Activated CD4-positive, alpha-beta memory T cell treated with anti-CD3 and anti-CD28 coated beads, Interleukin-2, amount 10 ng/mL, durations not matched to agents 7 days and 5 days (primary cell): ENCODE measurements at regions of chr12 and their contacts with region 1.

Region 1: DNA sequence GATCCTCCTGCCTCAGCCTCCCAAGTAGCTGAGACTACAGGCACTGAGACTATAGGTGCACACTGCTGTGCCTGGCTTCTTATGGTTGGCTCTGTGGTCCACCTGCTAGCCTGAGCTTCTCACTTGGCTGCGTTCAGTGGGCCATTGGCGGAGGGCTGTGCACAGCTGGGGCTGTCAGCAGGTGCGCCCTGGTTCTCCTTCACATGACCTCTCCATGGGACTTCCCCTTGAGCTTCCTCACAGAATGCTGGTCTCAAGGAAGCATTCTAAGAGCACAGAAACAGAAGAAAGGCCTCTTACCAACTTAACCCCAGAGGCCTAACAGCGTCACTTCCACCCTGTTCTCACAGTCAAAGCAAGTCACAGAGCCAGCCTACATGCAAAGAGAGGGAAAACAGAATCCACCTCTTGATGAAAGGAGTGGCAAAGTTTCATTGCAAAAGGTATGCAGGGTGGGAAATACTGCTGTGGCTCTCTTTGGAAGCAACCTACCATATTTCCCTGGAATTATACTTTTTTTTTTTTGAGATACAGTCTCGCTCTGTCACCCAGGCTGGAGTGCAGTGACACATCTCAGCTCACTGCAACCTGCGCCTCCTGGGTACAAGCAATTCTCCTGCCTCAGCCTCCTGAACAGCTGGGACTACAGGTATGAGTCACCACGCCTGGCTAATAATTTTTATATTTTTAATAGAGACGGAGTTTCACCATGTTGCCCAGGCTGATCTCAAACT is 9.3 kb downstream of the RILPL2 start:
- DNase-seq: peak; percentile 53
- H3K4me3 Mint-ChIP-seq: peak overlapping the region; percentile 10
- H3K27ac Mint-ChIP-seq: peak overlapping the region; percentile 78
- H3K4me1 Mint-ChIP-seq: peaks cover 40% of the 10 kb centered on the region
- H3K27me3 Mint-ChIP-seq: no peaks in the 10 kb centered on the region

Region 2: GRCh38 chr12:123445388-123446351 is 18.5 kb after region 1 on chr12:
- CTCF ChIA-PET with region 1: interaction called, 6 read pairs
- POLR2A ChIA-PET with region 1: interaction called, 58 read pairs
- DNase-seq: no peak
- H3K4me3 Mint-ChIP-seq: no peak overlapping the region
- H3K27ac Mint-ChIP-seq: peak overlapping the region; percentile 65
- H3K4me1 Mint-ChIP-seq: peaks cover 41% of the 10 kb centered on the region
- H3K27me3 Mint-ChIP-seq: no peaks in the 10 kb centered on the region